ENCODE measurements at regions of chr6 and their contacts with region 1.

Region 1: GRCh38 chr6:145699462-145699861 is 35.9 kb downstream of the EPM2A start:
- DNase-seq: no peak
- ATAC-seq: no peak
- H3K4me3 ChIP-seq: no peak overlapping the region
- H3K27ac ChIP-seq: no peak overlapping the region
- H3K4me1 ChIP-seq: peaks cover 14 to 22% of the 10 kb centered on the region in 2 donors
- H3K27me3 ChIP-seq: no peaks in the 10 kb centered on the region
- CTCF ChIP-seq: no peak
- POLR2A ChIP-seq: no peak

Region 2: DNA sequence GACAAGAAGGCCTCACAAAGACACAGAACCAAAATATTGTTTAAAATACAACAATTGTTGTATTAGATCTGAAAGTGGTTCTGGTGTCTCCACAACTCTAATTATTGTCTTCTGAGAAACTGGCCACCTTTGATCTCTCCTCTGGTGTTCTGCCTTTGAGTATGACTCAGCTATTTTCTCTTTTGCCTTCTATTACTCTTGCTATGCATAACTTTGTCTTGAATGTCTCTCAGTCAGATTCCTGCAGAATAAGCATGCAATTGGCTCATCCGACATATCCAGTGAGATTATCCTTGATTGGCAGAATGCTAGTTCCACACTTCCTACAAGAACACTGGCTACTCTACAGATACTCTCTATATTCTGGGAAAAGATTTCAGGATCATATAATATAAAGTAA is 50.2 kb after region 1 on chr6:
- in situ Hi-C with region 1: no loop called
- intact Hi-C with region 1: no loop called
- DNase-seq: no peak
- ATAC-seq: peak in 1 of 2 donors; percentile 87
- H3K4me3 ChIP-seq: no peak overlapping the region
- H3K27ac ChIP-seq: peak overlapping the region in 3 of 4 donors; percentile 16 to 54 (median 29)
- H3K4me1 ChIP-seq: peaks cover 0 to 6% of the 10 kb centered on the region in 2 donors
- H3K27me3 ChIP-seq: no peaks in the 10 kb centered on the region
- CTCF ChIP-seq: no peak
- POLR2A ChIP-seq: no peak

Region 3: GRCh38 chr6:146526192-146526591 is 826.7 kb after region 1 on chr6:
- in situ Hi-C with region 1: no loop called
- intact Hi-C with region 1: loop called (anchors 10 kb)
- DNase-seq: no peak
- ATAC-seq: no peak
- H3K4me3 ChIP-seq: no peak overlapping the region
- H3K27ac ChIP-seq: no peak overlapping the region
- H3K4me1 ChIP-seq: no peaks in the 10 kb centered on the region
- H3K27me3 ChIP-seq: no peaks in the 10 kb centered on the region
- CTCF ChIP-seq: no peak
- POLR2A ChIP-seq: no peak

Measured in gastrocnemius medialis (tissue), 4 donors.